Naive thymus-derived CD4-positive, alpha-beta T cell (primary cell): ENCODE measurements at regions of chr14 and their contacts with region 1.

Region 1: DNA sequence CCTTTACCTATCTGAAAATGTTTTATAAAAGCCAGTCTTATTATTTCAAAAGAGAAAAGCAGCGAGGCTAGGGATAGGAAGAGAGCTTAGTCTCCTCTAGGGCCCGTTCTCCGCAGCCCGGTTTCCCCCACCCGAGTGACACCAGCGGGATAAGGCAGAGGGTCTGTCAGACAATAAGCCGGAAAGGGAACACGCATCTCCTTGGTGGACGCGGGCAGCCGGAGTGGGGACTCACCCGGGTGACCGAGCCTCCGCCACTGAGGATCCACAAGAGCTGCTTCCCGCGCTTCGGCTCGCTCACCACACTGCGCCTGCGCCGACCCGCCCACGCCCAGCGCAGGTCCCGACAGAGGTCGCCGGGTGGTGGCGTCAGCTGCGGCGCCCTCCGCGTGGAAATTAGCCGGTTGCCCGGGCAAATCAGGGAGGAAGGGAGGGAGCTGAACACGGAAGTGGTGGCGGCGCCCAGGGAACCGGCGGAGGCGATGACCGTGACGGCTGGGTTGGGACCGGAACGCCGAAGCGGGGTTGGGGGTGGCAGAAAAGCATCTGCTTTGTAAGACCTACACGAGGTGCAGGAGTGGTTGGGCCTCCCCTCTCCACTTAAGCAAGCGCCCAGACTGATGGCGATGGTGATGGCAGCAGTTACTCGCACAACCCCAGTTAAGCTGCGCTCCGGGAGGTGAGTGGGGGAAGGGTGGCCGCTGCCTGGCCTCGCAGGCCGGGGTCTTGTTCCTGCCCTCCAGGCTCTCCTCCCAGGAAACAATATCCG is at the starts of genes SOCS4 and WDHD1:
- DNase-seq: peak; percentile 93 to 100 (median 96)
- ATAC-seq: peak; percentile 97
- H3K4me3 ChIP-seq: peak within 1 kb of the TSS; percentile 87
- H3K4me3 Mint-ChIP-seq: peak within 1 kb of the TSS; percentile 84 to 96 (median 93)
- H3K27ac ChIP-seq: peak within 1 kb of the TSS; percentile 86
- H3K27ac Mint-ChIP-seq: peak within 1 kb of the TSS; percentile 68 to 96 (median 92)
- H3K4me1 ChIP-seq: peaks cover 12 to 31% of the 10 kb centered on the region in 2 donors
- H3K4me1 Mint-ChIP-seq: peaks cover 26 to 59% (median 53%) of the 10 kb centered on the region in 7 donors
- H3K27me3 ChIP-seq: no peaks in the 10 kb centered on the region
- H3K27me3 Mint-ChIP-seq: no peaks in the 10 kb centered on the region
- total RNA-seq, gene SOCS4: 21.2 to 30.3 (median 22.1) TPM
- total RNA-seq, gene WDHD1: 2.6 to 26.6 (median 3.6) TPM

Region 2: GRCh38 chr14:54396493-54397335 is 630.3 kb before region 1 on chr14 and contains the start of gene CDKN3:
- CTCF ChIA-PET with region 1: no interaction called
- POLR2A ChIA-PET with region 1: no interaction called
- intact Hi-C with region 1: loop called in 1 of 2 experiments (anchors 2 kb)
- DNase-seq: peak; percentile 91 to 96 (median 95)
- ATAC-seq: peak; percentile 98
- H3K4me3 ChIP-seq: peak within 1 kb of the TSS; percentile 85
- H3K4me3 Mint-ChIP-seq: peak within 1 kb of the TSS; percentile 81 to 96 (median 90)
- H3K27ac ChIP-seq: peak within 1 kb of the TSS; percentile 46
- H3K27ac Mint-ChIP-seq: peak within 1 kb of the TSS; percentile 24 to 93 (median 83)
- H3K4me1 ChIP-seq: peaks cover 0 to 9% of the 10 kb centered on the region in 2 donors
- H3K4me1 Mint-ChIP-seq: peaks cover 0 to 38% (median 12%) of the 10 kb centered on the region in 7 donors
- H3K27me3 ChIP-seq: no peaks in the 10 kb centered on the region
- H3K27me3 Mint-ChIP-seq: peaks cover 0 to 2% (median 0%) of the 10 kb centered on the region in 5 donors
- total RNA-seq, gene CDKN3: 0.93 to 48.1 (median 3.0) TPM

Region 3: GRCh38 chr14:54509546-54510501 is 517.2 kb before region 1 on chr14 and contains the start of gene CGRRF1:
- CTCF ChIA-PET with region 1: no interaction called
- POLR2A ChIA-PET with region 1: no interaction called
- intact Hi-C with region 1: loop called in 1 of 2 experiments (anchors 1 kb)
- DNase-seq: peak; percentile 86 to 98 (median 89)
- ATAC-seq: peak; percentile 99
- H3K4me3 ChIP-seq: peak within 1 kb of the TSS; percentile 93
- H3K4me3 Mint-ChIP-seq: peak within 1 kb of the TSS; percentile 87 to 99 (median 96)
- H3K27ac ChIP-seq: peak within 1 kb of the TSS; percentile 72
- H3K27ac Mint-ChIP-seq: peak within 1 kb of the TSS; percentile 85 to 93 (median 89)
- H3K4me1 ChIP-seq: peaks cover 11% of the 10 kb centered on the region in 2 donors
- H3K4me1 Mint-ChIP-seq: peaks cover 20 to 56% (median 53%) of the 10 kb centered on the region in 7 donors
- H3K27me3 ChIP-seq: no peaks in the 10 kb centered on the region
- H3K27me3 Mint-ChIP-seq: peaks cover 0 to 10% (median 0%) of the 10 kb centered on the region in 5 donors
- total RNA-seq, gene CGRRF1: 11.2 to 24.1 (median 17.3) TPM

Region 4: DNA sequence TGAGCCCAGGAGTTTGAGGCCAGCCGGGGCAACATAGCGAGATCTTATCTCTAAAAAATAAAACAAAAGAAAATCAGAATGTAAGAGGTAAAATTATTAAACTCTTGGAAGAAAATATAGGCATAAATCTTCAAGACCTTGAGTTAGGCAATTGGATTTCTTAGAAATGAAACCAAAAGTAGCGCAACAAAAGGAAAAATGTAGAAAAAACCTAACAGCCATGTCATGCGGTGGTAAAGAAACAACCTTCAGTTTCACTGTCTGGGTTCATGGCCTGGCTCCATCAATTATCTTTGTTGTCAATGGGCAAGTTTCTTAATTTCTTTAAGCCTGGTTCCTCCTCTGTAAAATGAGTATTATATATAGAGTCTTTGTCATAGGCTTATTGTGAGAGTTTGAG is 118.8 kb before region 1 on chr14:
- CTCF ChIA-PET with region 1: no interaction called
- POLR2A ChIA-PET with region 1: no interaction called
- intact Hi-C with region 1: loop called in 1 of 2 experiments (anchors 1 kb)
- DNase-seq: no peak
- ATAC-seq: peak; percentile 56
- H3K4me3 ChIP-seq: no peak overlapping the region
- H3K4me3 Mint-ChIP-seq: peak overlapping the region in 5 of 10 donors; percentile 24 to 72 (median 32)
- H3K27ac ChIP-seq: no peak overlapping the region
- H3K27ac Mint-ChIP-seq: peak overlapping the region in 5 of 9 donors; percentile 8 to 90 (median 67)
- H3K4me1 ChIP-seq: peaks cover 3 to 7% of the 10 kb centered on the region in 2 donors
- H3K4me1 Mint-ChIP-seq: peaks cover 9 to 28% (median 13%) of the 10 kb centered on the region in 7 donors
- H3K27me3 ChIP-seq: no peaks in the 10 kb centered on the region
- H3K27me3 Mint-ChIP-seq: no peaks in the 10 kb centered on the region

Region 5: GRCh38 chr14:54967496-54967895 is 59.5 kb before region 1 on chr14:
- CTCF ChIA-PET with region 1: no interaction called
- POLR2A ChIA-PET with region 1: no interaction called
- intact Hi-C with region 1: no loop called
- DNase-seq: no peak
- ATAC-seq: no peak
- H3K4me3 ChIP-seq: no peak overlapping the region
- H3K4me3 Mint-ChIP-seq: no peak overlapping the region
- H3K27ac ChIP-seq: no peak overlapping the region
- H3K27ac Mint-ChIP-seq: no peak overlapping the region
- H3K4me1 ChIP-seq: no peaks in the 10 kb centered on the region
- H3K4me1 Mint-ChIP-seq: peaks cover 0 to 9% (median 0%) of the 10 kb centered on the region in 7 donors
- H3K27me3 ChIP-seq: no peaks in the 10 kb centered on the region
- H3K27me3 Mint-ChIP-seq: no peaks in the 10 kb centered on the region

Region 6: DNA sequence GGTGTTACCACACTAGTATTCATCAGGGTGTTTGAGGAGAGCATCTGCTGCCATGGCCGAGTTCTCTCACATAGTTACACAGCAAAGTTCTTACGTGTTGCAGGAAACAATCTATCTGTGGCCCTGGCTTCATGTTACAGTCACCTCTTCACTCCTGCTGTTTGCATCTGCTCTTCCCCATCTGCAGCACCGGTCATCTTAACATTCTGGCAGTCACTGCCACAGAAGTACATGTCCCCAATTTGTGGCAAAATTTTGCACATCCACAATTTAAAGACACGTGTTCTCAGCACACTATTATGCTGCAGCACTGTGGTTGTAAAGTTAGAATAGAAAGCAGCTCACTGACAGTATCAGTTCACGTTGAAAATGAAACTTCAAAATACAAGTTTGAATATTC is 47.7 kb after region 1 on chr14:
- CTCF ChIA-PET with region 1: no interaction called
- POLR2A ChIA-PET with region 1: no interaction called
- intact Hi-C with region 1: no loop called
- DNase-seq: no peak
- ATAC-seq: no peak
- H3K4me3 ChIP-seq: no peak overlapping the region
- H3K4me3 Mint-ChIP-seq: peak overlapping the region in 6 of 10 donors; percentile 39 to 69 (median 48)
- H3K27ac ChIP-seq: no peak overlapping the region
- H3K27ac Mint-ChIP-seq: peak overlapping the region in 6 of 9 donors; percentile 26 to 87 (median 50)
- H3K4me1 ChIP-seq: peaks cover 0 to 10% of the 10 kb centered on the region in 2 donors
- H3K4me1 Mint-ChIP-seq: peaks cover 12 to 42% (median 28%) of the 10 kb centered on the region in 7 donors
- H3K27me3 ChIP-seq: no peaks in the 10 kb centered on the region
- H3K27me3 Mint-ChIP-seq: peaks cover 0 to 6% (median 0%) of the 10 kb centered on the region in 5 donors

Region 7: GRCh38 chr14:55094321-55095157 is 67.6 kb after region 1 on chr14:
- CTCF ChIA-PET with region 1: no interaction called
- POLR2A ChIA-PET with region 1: no interaction called
- intact Hi-C with region 1: loop called in 1 of 2 experiments (anchors 1 kb)
- DNase-seq: no peak
- ATAC-seq: no peak
- H3K4me3 ChIP-seq: no peak overlapping the region
- H3K4me3 Mint-ChIP-seq: no peak overlapping the region
- H3K27ac ChIP-seq: no peak overlapping the region
- H3K27ac Mint-ChIP-seq: no peak overlapping the region
- H3K4me1 ChIP-seq: peaks cover 0 to 14% of the 10 kb centered on the region in 2 donors
- H3K4me1 Mint-ChIP-seq: peaks cover 12 to 43% (median 16%) of the 10 kb centered on the region in 7 donors
- H3K27me3 ChIP-seq: no peaks in the 10 kb centered on the region
- H3K27me3 Mint-ChIP-seq: peaks cover 0 to 4% (median 0%) of the 10 kb centered on the region in 5 donors

Region 8: GRCh38 chr14:55191203-55192053 is 164.5 kb after region 1 on chr14 and contains the start of gene DLGAP5:
- CTCF ChIA-PET with region 1: no interaction called
- POLR2A ChIA-PET with region 1: no interaction called
- intact Hi-C with region 1: loop called (anchors 1 to 2 kb)
- DNase-seq: peak; percentile 59 to 90 (median 86)
- ATAC-seq: peak; percentile 98
- H3K4me3 ChIP-seq: peak within 1 kb of the TSS; percentile 84
- H3K4me3 Mint-ChIP-seq: peak within 1 kb of the TSS; percentile 88 to 97 (median 90)
- H3K27ac ChIP-seq: peak within 1 kb of the TSS; percentile 58
- H3K27ac Mint-ChIP-seq: peak within 1 kb of the TSS; percentile 46 to 92 (median 68)
- H3K4me1 ChIP-seq: peaks cover 7 to 10% of the 10 kb centered on the region in 2 donors
- H3K4me1 Mint-ChIP-seq: peaks cover 5 to 42% (median 18%) of the 10 kb centered on the region in 7 donors
- H3K27me3 ChIP-seq: no peaks in the 10 kb centered on the region
- H3K27me3 Mint-ChIP-seq: peaks cover 0 to 4% (median 0%) of the 10 kb centered on the region in 5 donors
- total RNA-seq, gene DLGAP5: 0.49 to 46.7 TPM in 2 of 5 experiments, not detected in the others

Region 9: DNA sequence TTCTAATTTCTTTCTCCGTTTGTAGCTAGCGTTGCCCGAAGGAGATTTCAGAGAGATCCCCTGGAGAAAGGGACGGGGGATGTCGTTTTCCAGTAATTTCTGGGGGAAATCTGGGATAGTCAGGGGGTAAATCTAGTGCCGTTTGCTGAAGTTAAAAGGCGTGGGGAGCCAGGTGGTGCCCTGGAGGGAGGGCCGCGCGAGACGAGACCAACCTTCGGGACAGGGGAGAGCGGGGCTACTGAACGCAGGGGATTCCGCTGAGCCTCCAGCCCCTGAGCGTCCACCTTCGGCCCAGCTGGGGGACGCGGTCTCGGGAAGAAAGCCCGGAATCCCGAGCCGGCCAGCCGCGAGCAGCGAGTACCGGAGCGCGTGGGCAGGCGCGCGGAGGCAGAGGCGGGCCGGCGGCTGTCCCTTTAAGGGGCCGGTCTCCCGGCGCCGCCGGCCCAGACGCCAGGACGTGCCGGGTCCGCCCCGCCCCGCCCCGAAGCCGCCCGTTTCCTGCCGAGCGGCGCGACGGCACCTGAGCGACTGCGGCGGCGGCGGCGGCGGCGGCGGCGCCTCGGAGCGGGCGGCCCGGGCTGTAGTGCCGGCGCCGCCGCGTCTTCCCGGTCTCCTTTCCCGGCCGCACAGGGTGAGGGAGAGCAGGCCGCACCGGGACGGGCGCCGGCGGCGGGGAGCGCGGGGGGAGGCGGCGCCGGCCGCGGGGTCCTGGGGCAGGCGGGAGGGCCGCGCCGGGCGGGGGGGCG is 552.9 kb after region 1 on chr14 and contains the start of gene KTN1:
- CTCF ChIA-PET with region 1: no interaction called
- POLR2A ChIA-PET with region 1: no interaction called
- intact Hi-C with region 1: loop called in 1 of 2 experiments (anchors 10 kb)
- DNase-seq: peak; percentile 77 to 90 (median 88)
- ATAC-seq: peak; percentile 94
- H3K4me3 ChIP-seq: peak within 1 kb of the TSS; percentile 93
- H3K4me3 Mint-ChIP-seq: peak within 1 kb of the TSS; percentile 93 to 98 (median 95)
- H3K27ac ChIP-seq: peak within 1 kb of the TSS; percentile 86
- H3K27ac Mint-ChIP-seq: peak within 1 kb of the TSS; percentile 90 to 97 (median 93)
- H3K4me1 ChIP-seq: peaks cover 20 to 34% of the 10 kb centered on the region in 2 donors
- H3K4me1 Mint-ChIP-seq: peaks cover 20 to 28% (median 27%) of the 10 kb centered on the region in 7 donors
- H3K27me3 ChIP-seq: no peaks in the 10 kb centered on the region
- H3K27me3 Mint-ChIP-seq: no peaks in the 10 kb centered on the region
- total RNA-seq, gene KTN1: 87.3 to 131 (median 105) TPM